A673 (cell line): ENCODE measurements at regions of chr22 and their contacts with region 1.

Region 1: GRCh38 chr22:26196657-26197056 is 27.4 kb downstream of the SEZ6L start:
- DNase-seq: no peak
- H3K4me3 ChIP-seq: no peak overlapping the region
- H3K27ac ChIP-seq: no peak overlapping the region
- H3K4me1 ChIP-seq: no peaks in the 10 kb centered on the region
- H3K27me3 ChIP-seq: no peaks in the 10 kb centered on the region
- CTCF ChIP-seq: no peak

Region 2: GRCh38 chr22:25091458-25091857 is 1105.2 kb before region 1 on chr22:
- CTCF ChIA-PET with region 1: no interaction called
- POLR2A ChIA-PET with region 1: no interaction called
- intact Hi-C with region 1: no loop called
- DNase-seq: no peak
- H3K4me3 ChIP-seq: no peak overlapping the region
- H3K27ac ChIP-seq: no peak overlapping the region
- H3K4me1 ChIP-seq: no peaks in the 10 kb centered on the region
- H3K27me3 ChIP-seq: no peaks in the 10 kb centered on the region
- CTCF ChIP-seq: no peak

Region 3: GRCh38 chr22:26215736-26216135 is 19.1 kb after region 1 on chr22:
- CTCF ChIA-PET with region 1: no interaction called
- POLR2A ChIA-PET with region 1: no interaction called
- intact Hi-C with region 1: loop called (anchors 2 kb)
- DNase-seq: no peak
- H3K4me3 ChIP-seq: no peak overlapping the region
- H3K27ac ChIP-seq: no peak overlapping the region
- H3K4me1 ChIP-seq: no peaks in the 10 kb centered on the region
- H3K27me3 ChIP-seq: peaks cover 26% of the 10 kb centered on the region
- CTCF ChIP-seq: no peak